ENCODE measurements at regions of chr5 and their contacts with region 1.

Region 1: GRCh38 chr5:151651997-151652645 is 34.6 kb downstream of the SPARC start:
- DNase-seq: peak; percentile 76
- H3K4me3 ChIP-seq: no peak overlapping the region
- H3K27ac ChIP-seq: no peak overlapping the region
- H3K4me1 ChIP-seq: peaks cover 12% of the 10 kb centered on the region
- H3K27me3 ChIP-seq: no peaks in the 10 kb centered on the region
- CTCF ChIP-seq: peak; percentile 98 to 99

Region 2: DNA sequence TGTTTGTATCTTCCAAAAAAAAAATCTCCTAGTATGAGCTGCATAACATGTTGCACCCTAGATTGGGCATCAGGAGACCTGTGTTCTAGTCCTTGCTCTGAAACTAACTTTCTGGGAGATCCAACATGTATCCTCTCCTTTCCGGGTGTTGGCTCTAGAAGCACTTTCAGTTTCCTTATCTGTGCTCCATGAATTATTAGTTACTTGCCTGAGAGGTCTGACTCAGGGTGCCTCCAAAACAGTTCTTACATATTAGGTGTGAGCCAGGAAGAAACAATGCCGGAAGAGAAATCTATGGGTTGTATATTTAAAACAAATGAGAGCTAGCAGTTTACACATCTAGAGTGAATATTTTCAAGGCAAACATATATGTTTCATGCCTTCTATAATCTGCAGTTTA is 268.0 kb before region 1 on chr5:
- CTCF ChIA-PET with region 1: no interaction called
- dilution Hi-C with region 1: no loop called
- in situ Hi-C with region 1: no loop called
- intact Hi-C with region 1: loop called (anchors 5 kb)
- DNase-seq: peak; percentile 26
- H3K4me3 ChIP-seq: no peak overlapping the region
- H3K27ac ChIP-seq: no peak overlapping the region
- H3K4me1 ChIP-seq: no peaks in the 10 kb centered on the region
- H3K27me3 ChIP-seq: no peaks in the 10 kb centered on the region
- CTCF ChIP-seq: no peak

Region 3: DNA sequence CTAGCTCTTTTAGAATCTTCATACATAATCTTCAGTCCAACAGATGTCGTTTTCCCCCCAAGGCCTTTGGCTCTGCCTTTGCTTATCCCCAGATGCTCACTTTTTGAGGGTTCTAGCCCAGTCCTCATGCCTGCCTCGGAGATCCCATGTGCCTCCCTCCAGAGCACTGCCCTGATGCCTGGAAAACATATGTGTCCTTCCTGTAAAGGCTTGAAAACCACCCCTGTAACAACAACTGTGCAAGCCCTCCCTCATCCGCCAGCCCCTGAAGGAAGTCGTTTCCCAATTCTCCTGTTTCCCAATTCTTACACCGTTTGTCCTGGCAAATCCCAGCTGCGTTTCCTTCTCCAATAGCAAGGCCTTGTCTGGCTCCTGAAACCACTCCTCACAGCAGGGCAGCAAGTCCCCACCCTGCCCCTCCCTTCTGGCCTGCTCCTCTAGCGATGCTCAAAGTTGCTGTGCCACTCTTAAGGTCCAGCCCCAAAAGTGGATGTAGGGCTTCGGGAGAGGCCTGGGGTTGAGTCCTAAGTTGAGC is 152.6 kb before region 1 on chr5:
- CTCF ChIA-PET with region 1: no interaction called
- dilution Hi-C with region 1: no loop called
- in situ Hi-C with region 1: no loop called
- intact Hi-C with region 1: loop called (anchors 2 kb)
- DNase-seq: no peak
- H3K4me3 ChIP-seq: no peak overlapping the region
- H3K27ac ChIP-seq: no peak overlapping the region
- H3K4me1 ChIP-seq: no peaks in the 10 kb centered on the region
- H3K27me3 ChIP-seq: no peaks in the 10 kb centered on the region
- CTCF ChIP-seq: no peak

Region 4: GRCh38 chr5:151547364-151547763 is 104.8 kb before region 1 on chr5:
- CTCF ChIA-PET with region 1: no interaction called
- dilution Hi-C with region 1: loop called (anchors 5 kb)
- in situ Hi-C with region 1: no loop called
- intact Hi-C with region 1: no loop called
- DNase-seq: no peak
- H3K4me3 ChIP-seq: no peak overlapping the region
- H3K27ac ChIP-seq: no peak overlapping the region
- H3K4me1 ChIP-seq: no peaks in the 10 kb centered on the region
- H3K27me3 ChIP-seq: no peaks in the 10 kb centered on the region
- CTCF ChIP-seq: no peak

Region 5: DNA sequence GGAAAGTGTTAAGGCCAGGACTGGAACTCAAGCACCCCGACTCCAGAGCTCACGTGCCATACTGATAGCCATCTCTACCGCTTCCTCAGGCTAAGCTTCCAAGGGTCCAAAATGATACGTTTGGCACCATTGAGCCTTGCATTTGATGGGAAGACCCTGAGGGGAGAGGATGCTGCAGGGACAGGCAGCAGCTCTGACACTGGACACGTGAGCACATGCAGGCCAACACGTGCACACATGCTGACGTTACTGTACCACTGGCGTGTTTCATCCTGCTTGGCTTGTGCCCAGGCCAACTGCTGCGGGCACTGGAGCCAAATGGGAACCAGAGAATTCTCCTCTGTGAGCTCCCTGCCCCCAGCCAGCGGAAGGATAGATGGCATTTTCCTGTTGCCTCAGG is 66.2 kb before region 1 on chr5:
- CTCF ChIA-PET with region 1: interaction called, 3 read pairs
- dilution Hi-C with region 1: no loop called
- in situ Hi-C with region 1: loop called in 1 of 2 experiments (anchors 5 kb)
- intact Hi-C with region 1: loop called (anchors 1 kb)
- DNase-seq: peak; percentile 84
- H3K4me3 ChIP-seq: no peak overlapping the region
- H3K27ac ChIP-seq: peak overlapping the region; percentile 73
- H3K4me1 ChIP-seq: peaks cover 70% of the 10 kb centered on the region
- H3K27me3 ChIP-seq: no peaks in the 10 kb centered on the region
- CTCF ChIP-seq: no peak

Region 6: GRCh38 chr5:151612689-151613427 is 39.3 kb before region 1 on chr5:
- CTCF ChIA-PET with region 1: interaction called, 4 read pairs
- dilution Hi-C with region 1: loop called (anchors 5 kb)
- in situ Hi-C with region 1: no loop called
- intact Hi-C with region 1: loop called (anchors 1 kb)
- DNase-seq: peak; percentile 100
- H3K4me3 ChIP-seq: no peak overlapping the region
- H3K27ac ChIP-seq: peak overlapping the region; percentile 97
- H3K4me1 ChIP-seq: peaks cover 62% of the 10 kb centered on the region
- H3K27me3 ChIP-seq: no peaks in the 10 kb centered on the region
- CTCF ChIP-seq: no peak

Measured in mammary epithelial cell (primary cell).